MCF 10A (cell line): ENCODE measurements at regions of chr15 and their contacts with region 1.

Region 1: DNA sequence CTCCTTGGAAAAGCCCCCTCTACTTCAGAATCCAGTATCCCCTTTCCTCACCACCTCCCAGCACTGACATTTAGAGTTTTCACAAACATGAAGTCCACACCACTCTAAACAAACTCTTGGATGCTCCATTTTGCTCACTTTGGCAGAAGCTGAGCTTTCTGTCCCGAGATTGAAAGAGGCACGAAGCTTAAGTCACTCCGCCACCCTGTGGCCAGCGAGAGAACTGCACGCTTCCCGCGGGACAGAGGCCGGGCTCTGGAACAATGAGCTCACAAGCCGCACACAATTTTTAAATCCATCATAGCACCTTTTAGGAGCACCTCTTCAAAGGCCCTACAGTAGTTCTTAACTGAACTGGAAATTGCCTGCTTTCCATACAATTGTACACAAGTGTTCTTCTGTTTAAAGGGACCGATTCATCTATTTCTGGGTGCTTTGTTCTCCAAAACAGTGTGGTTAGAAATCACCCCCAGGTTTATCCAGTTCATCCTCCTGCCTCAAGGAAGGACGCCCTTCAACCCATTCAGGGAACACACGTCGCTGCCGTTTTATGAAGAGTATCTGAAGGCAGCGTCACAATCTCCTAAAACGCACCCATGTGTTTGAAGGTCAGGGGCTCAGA is 226.1 kb downstream of the VPS13C start:
- DNase-seq: peak; percentile 71
- H3K4me3 Mint-ChIP-seq: no peak overlapping the region
- H3K27ac Mint-ChIP-seq: no peak overlapping the region
- H3K4me1 Mint-ChIP-seq: no peaks in the 10 kb centered on the region
- H3K27me3 Mint-ChIP-seq: no peaks in the 10 kb centered on the region
- CTCF ChIP-seq: peak; percentile 97

Region 2: DNA sequence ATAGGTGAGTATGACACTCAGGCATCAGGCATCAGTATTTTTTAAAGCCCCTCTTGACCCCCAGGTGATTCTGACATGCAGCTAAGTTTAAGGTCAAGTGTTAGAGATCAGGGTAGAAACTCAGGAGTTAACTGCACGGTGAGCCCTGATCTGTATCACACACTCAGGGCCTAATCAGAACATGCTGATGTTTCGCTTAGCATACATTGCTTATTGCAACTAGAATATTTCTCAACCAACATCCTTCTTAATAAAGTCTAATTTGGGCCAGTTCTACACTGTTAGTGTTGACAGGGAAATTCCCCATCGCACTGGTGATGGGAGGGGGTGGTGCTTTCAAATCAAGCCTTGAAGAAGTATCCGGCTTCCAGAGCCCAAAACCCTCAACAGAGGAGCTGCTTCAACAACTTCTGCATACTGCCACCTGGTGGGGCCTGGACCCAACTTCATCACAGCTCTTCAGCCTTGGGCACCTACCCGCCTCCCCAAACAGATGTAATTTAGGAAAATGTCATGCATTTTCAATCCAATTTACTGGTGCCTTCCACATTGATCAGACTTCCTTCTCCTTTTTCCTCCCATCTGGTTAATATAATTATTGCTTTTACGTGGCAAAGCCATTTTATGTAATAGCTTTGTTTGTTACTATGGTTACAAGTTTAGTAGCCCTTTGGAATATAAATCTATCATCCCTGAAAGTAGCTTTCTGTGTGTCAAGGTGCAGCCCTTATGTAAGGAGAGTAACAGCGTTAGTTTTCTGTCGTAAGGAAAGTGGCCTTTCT is 917.3 kb before region 1 on chr15:
- CTCF ChIA-PET with region 1: interaction called, 8 read pairs
- POLR2A ChIA-PET with region 1: no interaction called
- intact Hi-C with region 1: loop called (anchors 2 kb)
- DNase-seq: peak; percentile 80
- H3K4me3 Mint-ChIP-seq: no peak overlapping the region
- H3K27ac Mint-ChIP-seq: no peak overlapping the region
- H3K4me1 Mint-ChIP-seq: no peaks in the 10 kb centered on the region
- H3K27me3 Mint-ChIP-seq: no peaks in the 10 kb centered on the region
- CTCF ChIP-seq: peak; percentile 74

Region 3: GRCh38 chr15:61169904-61170695 is 664.1 kb before region 1 on chr15:
- CTCF ChIA-PET with region 1: interaction called, 43 read pairs
- POLR2A ChIA-PET with region 1: no interaction called
- intact Hi-C with region 1: loop called (anchors 1 kb)
- DNase-seq: no peak
- H3K4me3 Mint-ChIP-seq: no peak overlapping the region
- H3K27ac Mint-ChIP-seq: no peak overlapping the region
- H3K4me1 Mint-ChIP-seq: no peaks in the 10 kb centered on the region
- H3K27me3 Mint-ChIP-seq: no peaks in the 10 kb centered on the region
- CTCF ChIP-seq: no peak

Region 4: GRCh38 chr15:61227269-61227949 is 606.8 kb before region 1 on chr15:
- CTCF ChIA-PET with region 1: interaction called, 11 read pairs
- POLR2A ChIA-PET with region 1: no interaction called
- intact Hi-C with region 1: no loop called
- DNase-seq: peak; percentile 9
- H3K4me3 Mint-ChIP-seq: peak overlapping the region; percentile 78
- H3K27ac Mint-ChIP-seq: no peak overlapping the region
- H3K4me1 Mint-ChIP-seq: no peaks in the 10 kb centered on the region
- H3K27me3 Mint-ChIP-seq: peaks cover 51% of the 10 kb centered on the region
- CTCF ChIP-seq: no peak

Region 5: GRCh38 chr15:61621146-61621545 is 213.0 kb before region 1 on chr15:
- CTCF ChIA-PET with region 1: interaction called, 22 read pairs
- POLR2A ChIA-PET with region 1: no interaction called
- intact Hi-C with region 1: loop called (anchors 1 kb)
- DNase-seq: peak; percentile 49
- H3K4me3 Mint-ChIP-seq: no peak overlapping the region
- H3K27ac Mint-ChIP-seq: no peak overlapping the region
- H3K4me1 Mint-ChIP-seq: no peaks in the 10 kb centered on the region
- H3K27me3 Mint-ChIP-seq: no peaks in the 10 kb centered on the region
- CTCF ChIP-seq: peak; percentile 53

Region 6: GRCh38 chr15:61702224-61703020 is 131.8 kb before region 1 on chr15:
- CTCF ChIA-PET with region 1: no interaction called
- POLR2A ChIA-PET with region 1: no interaction called
- intact Hi-C with region 1: loop called (anchors 1 kb)
- DNase-seq: peak; percentile 29
- H3K4me3 Mint-ChIP-seq: no peak overlapping the region
- H3K27ac Mint-ChIP-seq: no peak overlapping the region
- H3K4me1 Mint-ChIP-seq: peaks cover 14% of the 10 kb centered on the region
- H3K27me3 Mint-ChIP-seq: no peaks in the 10 kb centered on the region
- CTCF ChIP-seq: no peak

Region 7: DNA sequence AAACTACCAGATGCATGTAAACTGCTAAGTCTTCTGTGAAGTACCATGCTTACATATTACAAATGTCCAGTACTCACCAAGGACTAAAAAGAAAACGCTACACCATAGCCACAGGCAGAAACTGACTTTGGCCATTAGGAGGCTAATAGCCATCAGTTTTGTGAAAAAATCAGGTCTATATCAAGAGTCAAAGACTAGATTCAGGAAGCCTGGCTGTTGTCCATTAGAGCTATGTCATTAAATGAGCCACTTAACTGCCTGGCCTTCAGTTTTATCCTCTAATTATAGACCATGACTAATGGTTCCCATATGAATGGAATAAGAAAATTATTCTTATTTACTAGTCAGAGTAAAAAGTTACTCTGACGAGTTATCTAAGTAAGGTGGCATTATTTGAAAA is 81.9 kb after region 1 on chr15:
- CTCF ChIA-PET with region 1: no interaction called
- POLR2A ChIA-PET with region 1: no interaction called
- intact Hi-C with region 1: no loop called
- DNase-seq: no peak
- H3K4me3 Mint-ChIP-seq: no peak overlapping the region
- H3K27ac Mint-ChIP-seq: no peak overlapping the region
- H3K4me1 Mint-ChIP-seq: no peaks in the 10 kb centered on the region
- H3K27me3 Mint-ChIP-seq: no peaks in the 10 kb centered on the region
- CTCF ChIP-seq: no peak

Region 8: DNA sequence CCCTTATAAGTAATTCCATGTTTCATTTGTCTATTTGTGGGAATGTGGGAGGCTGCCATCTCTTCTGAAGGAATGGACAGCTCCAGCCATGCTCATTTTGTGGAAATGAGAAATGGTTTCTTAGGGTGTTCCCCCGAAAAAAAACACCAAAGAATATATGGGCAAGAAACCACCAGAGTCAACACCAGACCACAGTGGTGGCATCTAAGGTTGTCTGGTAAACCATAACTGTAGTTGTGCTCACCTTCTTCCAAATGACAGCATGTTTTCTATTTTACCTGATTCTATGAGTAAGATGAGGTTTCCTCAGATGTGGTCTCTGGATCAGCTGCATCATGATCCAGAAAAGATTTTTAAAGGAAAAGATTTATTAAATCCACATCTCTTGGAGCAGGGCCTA is 547.9 kb after region 1 on chr15:
- CTCF ChIA-PET with region 1: no interaction called
- POLR2A ChIA-PET with region 1: no interaction called
- intact Hi-C with region 1: no loop called
- DNase-seq: no peak
- H3K4me3 Mint-ChIP-seq: no peak overlapping the region
- H3K27ac Mint-ChIP-seq: no peak overlapping the region
- H3K4me1 Mint-ChIP-seq: no peaks in the 10 kb centered on the region
- H3K27me3 Mint-ChIP-seq: peaks cover 23% of the 10 kb centered on the region
- CTCF ChIP-seq: no peak